ENCODE measurements at regions of chr3 and their contacts with region 1.

Region 1: GRCh38 chr3:8622873-8623691 is 21.5 kb downstream of the SSUH2 start:
- DNase-seq: peak; percentile 84
- ATAC-seq: peak; percentile 91

Region 2: DNA sequence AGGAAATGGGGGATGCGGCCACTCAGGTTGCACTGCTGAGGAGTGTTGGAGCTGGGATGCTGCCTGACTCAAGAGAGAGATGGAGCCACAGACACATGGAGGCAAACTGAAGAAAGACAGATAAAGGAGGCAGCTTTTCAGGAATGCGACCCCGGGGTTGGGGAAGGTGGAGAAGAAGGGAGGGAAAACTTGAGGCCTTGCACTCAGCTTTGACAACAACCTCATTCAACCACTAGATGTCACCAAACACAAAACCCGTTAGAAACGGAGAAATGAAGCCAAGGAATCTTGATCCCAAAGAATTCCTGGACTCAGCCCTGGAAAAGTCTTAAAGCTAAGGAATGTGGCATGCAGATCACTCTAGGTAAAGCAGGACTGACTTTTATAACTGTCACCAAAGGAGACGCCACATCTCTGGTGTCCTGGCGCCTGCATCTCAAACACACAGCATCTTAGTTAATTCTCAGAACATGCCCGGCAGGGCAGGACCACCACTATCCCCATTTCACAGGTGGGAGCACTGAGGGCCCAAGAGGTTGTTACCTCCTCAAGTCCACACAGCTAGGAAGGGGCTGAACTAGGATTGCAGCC is 181.0 kb before region 1 on chr3:
- intact Hi-C with region 1: loop called (anchors 2 kb)
- DNase-seq: no peak
- ATAC-seq: peak; percentile 63

Measured in sciatic nerve (tissue), 2 donors.